OCI-LY7 (cell line): ENCODE measurements at regions of chr6 and their contacts with region 1.

Region 1: DNA sequence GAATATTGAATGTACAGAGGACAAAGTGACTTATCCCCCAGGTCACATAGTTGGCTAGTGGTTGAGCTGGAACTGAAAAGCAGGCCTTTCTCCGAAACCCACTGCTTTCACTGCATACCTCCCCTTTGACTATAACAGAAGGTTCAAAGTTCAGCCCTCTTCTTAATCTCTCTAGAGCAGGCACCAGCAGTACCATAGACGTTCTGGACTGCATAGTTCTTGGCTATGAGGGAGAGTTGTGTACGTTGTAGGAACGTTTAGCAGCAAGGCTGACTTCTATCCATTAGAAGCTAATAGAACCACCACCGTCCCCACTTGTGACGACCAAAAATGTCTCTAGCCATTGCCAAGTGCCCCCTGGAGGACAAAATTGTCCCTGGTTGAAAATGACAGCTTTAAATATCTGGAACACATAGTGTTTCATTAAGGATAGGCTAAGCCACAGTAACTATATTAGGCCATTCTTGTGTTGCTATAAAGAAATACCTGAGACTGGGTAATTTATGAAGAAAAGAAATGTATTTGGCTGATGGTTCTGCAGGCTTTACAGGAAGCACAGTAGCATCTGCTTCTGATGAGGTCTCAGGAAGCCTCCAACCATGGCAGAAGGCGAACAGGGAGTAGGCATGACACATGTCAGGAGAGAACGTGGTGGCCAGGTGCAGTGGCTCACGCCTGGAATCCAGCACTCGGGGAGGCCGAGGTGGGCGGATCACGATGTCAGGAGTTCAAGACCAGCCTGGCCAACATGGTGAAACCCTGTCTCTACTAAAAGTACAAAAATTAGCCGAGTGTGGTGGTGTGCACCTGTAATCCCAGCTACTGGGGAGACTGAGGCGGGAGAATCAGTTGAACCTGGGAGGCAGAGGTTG is 123.6 kb upstream of the MTHFD1L start:
- DNase-seq: peak; percentile 68
- H3K4me3 ChIP-seq: no peak overlapping the region
- H3K27ac ChIP-seq: no peak overlapping the region
- H3K4me1 ChIP-seq: peaks cover 4% of the 10 kb centered on the region
- CTCF ChIP-seq: peak; percentile 87

Region 2: GRCh38 chr6:150813319-150813992 is 71.6 kb after region 1 on chr6:
- CTCF ChIA-PET with region 1: no interaction called
- POLR2A ChIA-PET with region 1: interaction called, 5 read pairs
- intact Hi-C with region 1: loop called (anchors 2 kb)
- DNase-seq: no peak
- H3K4me3 ChIP-seq: no peak overlapping the region
- H3K27ac ChIP-seq: no peak overlapping the region
- H3K4me1 ChIP-seq: peaks cover 8% of the 10 kb centered on the region
- CTCF ChIP-seq: no peak

Region 3: DNA sequence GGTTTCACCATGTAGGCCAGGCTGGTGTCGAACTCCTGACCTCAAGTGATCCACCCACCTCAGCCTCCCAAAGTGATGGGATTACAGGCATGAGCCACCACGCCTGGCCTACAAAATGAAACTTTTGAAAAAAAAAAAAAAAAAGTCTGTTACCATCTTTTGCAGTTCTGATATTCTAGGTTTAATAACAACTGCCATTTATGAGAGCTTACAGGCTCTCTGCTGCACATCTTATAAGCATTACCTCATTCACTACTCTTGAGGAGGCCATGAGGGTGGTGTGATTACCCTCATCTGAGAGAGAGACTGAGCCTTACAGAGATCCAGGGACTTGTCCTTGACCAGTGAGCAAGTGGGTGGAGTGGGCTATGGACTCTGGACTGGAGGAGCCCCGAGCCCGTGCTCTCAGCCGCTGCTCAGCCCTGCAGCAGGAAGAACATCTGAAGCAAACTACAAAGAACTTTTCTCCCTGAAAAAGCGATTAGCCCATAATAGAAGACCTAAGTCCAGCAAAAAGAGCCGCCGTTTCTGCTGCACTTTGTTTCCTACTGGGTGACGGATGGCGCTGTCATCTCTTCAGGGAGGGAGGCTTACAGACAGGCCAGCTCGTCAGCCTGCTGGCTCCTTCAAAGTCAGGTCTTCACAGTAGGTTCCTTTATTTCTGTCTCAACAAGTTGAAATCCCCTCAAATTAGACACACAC is 378.1 kb after region 1 on chr6:
- CTCF ChIA-PET with region 1: no interaction called
- POLR2A ChIA-PET with region 1: no interaction called
- intact Hi-C with region 1: no loop called
- DNase-seq: no peak
- H3K4me3 ChIP-seq: no peak overlapping the region
- H3K27ac ChIP-seq: no peak overlapping the region
- H3K4me1 ChIP-seq: no peaks in the 10 kb centered on the region
- CTCF ChIP-seq: no peak